GM12878 (cell line): ENCODE measurements at regions of chr1 and their contacts with region 1.

Region 1: DNA sequence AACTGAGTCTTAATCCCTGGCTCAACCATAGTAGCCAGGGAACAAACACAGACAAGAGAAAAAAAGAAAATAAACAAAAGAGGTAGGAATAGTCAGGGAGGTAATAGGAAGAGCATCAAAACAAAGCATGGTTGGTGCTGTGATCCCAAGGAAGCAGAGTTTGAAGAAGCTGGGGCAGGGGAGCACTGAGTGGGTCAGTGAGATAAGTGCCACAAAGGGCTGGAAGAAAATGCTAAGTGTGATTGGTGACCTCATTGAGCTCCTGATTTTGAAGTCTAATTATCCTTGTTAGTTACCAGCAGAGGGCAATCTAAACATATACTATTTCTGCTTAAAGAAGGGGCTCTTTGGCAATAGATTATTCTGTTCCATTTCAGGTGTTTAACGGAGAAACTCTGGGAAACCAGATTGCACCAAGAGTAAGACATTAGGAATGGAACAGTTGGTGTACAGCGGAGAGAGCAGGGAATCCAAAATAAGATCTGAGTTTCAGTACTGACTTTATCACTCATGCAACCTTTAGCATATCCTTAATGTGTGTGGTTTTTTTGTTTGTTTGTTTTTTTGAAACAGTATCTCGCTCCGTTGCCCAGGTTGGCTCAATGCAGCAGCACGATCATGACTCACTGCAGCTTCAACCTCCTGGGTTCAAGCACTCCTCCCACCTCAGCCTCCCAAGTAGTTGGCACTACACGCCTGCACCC is 30.7 kb upstream of the KIAA1614 start:
- DNase-seq: no peak
- ATAC-seq: peak; percentile 92
- H3K4me3 ChIP-seq: no peak overlapping the region
- H3K27ac ChIP-seq: no peak overlapping the region
- H3K4me1 ChIP-seq: no peaks in the 10 kb centered on the region
- H3K27me3 ChIP-seq: no peaks in the 10 kb centered on the region
- CTCF ChIP-seq: peak; percentile 38 to 66 (median 49); a peak in 5 of 6 replicates
- EP300 ChIP-seq: no peak
- POLR2A ChIP-seq: no peak
- RAD21 ChIP-seq: peak; percentile 80

Region 2: DNA sequence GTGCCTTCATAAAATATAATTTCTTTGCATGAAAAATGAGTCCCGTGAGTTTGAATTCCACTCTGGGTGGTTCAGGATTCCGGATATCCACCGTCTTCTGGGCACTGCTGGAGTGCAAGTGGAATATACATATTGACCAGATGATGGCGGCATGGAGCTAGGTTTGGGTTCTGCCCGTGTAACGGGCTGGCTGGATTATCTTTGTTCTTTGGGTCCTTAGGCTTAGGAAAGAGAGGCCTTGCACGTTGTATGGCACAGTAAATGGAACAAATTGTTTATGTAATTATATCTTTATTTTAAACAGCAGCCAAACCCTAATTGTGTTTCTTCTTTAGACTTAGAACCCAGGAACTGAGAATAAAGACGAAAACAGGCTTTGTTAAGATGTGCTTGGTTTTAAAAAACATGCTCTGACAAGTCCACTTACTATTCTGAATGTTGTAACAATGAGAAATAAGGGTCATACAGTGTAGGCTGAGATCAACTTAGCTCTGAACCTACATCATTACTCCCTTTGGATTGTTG is 366.0 kb before region 1 on chr1:
- CTCF ChIA-PET with region 1: interaction called, 22 read pairs
- POLR2A ChIA-PET with region 1: no interaction called
- RAD21 ChIA-PET with region 1: interaction called, 16 read pairs
- SMC1A ChIA-PET with region 1: interaction called, 18 read pairs
- in situ Hi-C with region 1: no loop called
- intact Hi-C with region 1: no loop called
- DNase-seq: peak; percentile 49
- ATAC-seq: peak; percentile 99
- H3K4me3 ChIP-seq: no peak overlapping the region
- H3K27ac ChIP-seq: peak overlapping the region; percentile 40; the same call in 1 of the 2 replicates
- H3K4me1 ChIP-seq: peaks cover 3% of the 10 kb centered on the region; the same call in 1 of the 2 replicates
- H3K27me3 ChIP-seq: no peaks in the 10 kb centered on the region
- CTCF ChIP-seq: peak; percentile 72 to 88 (median 76)
- EP300 ChIP-seq: no peak
- POLR2A ChIP-seq: no peak
- RAD21 ChIP-seq: peak; percentile 92

Region 3: GRCh38 chr1:180920702-180921101 is 38.7 kb after region 1 on chr1:
- CTCF ChIA-PET with region 1: interaction called, 344 read pairs
- POLR2A ChIA-PET with region 1: interaction called, 3 read pairs
- RAD21 ChIA-PET with region 1: interaction called, 215 read pairs
- SMC1A ChIA-PET with region 1: interaction called, 304 read pairs
- in situ Hi-C with region 1: no loop called
- intact Hi-C with region 1: loop called (anchors 1 kb)
- DNase-seq: no peak
- ATAC-seq: peak; percentile 38; the same call in 1 of the 3 replicates
- H3K4me3 ChIP-seq: no peak overlapping the region
- H3K27ac ChIP-seq: no peak overlapping the region
- H3K4me1 ChIP-seq: peaks cover 9% of the 10 kb centered on the region
- H3K27me3 ChIP-seq: peaks cover 0 to 3% of the 10 kb centered on the region in 2 experiments; a peak in 1 of 4 replicates
- CTCF ChIP-seq: peak; percentile 41 to 57 (median 48)
- EP300 ChIP-seq: no peak
- POLR2A ChIP-seq: no peak
- RAD21 ChIP-seq: peak; percentile 33; the same call in 1 of the 2 replicates

Region 4: DNA sequence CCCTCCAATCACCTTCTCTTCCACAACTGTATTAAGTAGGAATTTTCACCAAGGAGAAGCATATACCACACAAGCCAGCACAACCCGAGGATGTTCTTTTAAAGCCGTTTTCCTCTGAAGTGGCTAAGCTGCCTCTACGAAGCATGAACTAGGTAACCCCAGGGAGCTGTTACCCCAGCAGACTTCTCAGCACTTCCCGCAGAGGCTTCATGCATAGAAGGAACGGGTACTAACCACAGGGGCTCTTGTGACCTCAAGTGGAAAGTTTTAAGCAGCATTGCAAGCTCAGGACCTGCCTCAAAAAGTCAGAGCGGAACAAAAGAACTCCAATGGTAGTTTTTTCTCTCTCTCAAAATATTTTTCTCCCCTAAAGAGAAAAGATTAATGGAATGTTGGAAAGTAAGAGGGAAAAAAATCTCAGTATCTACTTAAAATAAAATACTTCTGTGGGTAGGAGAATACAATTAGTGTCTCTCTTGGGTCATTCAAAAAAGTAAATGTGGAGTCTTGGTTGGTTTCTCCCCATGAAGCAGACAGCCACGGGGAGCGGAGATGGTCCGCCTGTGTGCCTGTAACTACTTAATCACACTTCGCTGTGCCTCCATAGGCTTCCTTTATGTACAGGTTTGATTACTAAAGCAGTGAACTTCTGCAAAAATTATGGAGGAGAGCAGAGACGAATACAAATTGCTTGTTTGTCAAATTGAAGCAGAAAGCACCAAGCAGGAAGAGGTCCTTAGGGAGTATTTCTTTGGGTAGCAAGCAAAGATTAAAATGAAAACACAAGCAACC is 99.8 kb after region 1 on chr1:
- CTCF ChIA-PET with region 1: interaction called, 36 read pairs
- POLR2A ChIA-PET with region 1: no interaction called
- RAD21 ChIA-PET with region 1: interaction called, 26 read pairs
- SMC1A ChIA-PET with region 1: interaction called, 72 read pairs
- in situ Hi-C with region 1: no loop called
- intact Hi-C with region 1: loop called (anchors 2 kb)
- DNase-seq: peak; percentile 47
- ATAC-seq: peak; percentile 91
- H3K4me3 ChIP-seq: peak overlapping the region; percentile 19; the same call in 1 of the 2 replicates
- H3K27ac ChIP-seq: peak overlapping the region; percentile 65
- H3K4me1 ChIP-seq: peaks cover 8% of the 10 kb centered on the region; the same call in 1 of the 2 replicates
- H3K27me3 ChIP-seq: no peaks in the 10 kb centered on the region
- CTCF ChIP-seq: peak in 1 of 3 experiments; percentile 22; a peak in 1 of 6 replicates
- EP300 ChIP-seq: no peak
- POLR2A ChIP-seq: no peak
- RAD21 ChIP-seq: peak; percentile 32; the same call in 1 of the 2 replicates

Region 5: DNA sequence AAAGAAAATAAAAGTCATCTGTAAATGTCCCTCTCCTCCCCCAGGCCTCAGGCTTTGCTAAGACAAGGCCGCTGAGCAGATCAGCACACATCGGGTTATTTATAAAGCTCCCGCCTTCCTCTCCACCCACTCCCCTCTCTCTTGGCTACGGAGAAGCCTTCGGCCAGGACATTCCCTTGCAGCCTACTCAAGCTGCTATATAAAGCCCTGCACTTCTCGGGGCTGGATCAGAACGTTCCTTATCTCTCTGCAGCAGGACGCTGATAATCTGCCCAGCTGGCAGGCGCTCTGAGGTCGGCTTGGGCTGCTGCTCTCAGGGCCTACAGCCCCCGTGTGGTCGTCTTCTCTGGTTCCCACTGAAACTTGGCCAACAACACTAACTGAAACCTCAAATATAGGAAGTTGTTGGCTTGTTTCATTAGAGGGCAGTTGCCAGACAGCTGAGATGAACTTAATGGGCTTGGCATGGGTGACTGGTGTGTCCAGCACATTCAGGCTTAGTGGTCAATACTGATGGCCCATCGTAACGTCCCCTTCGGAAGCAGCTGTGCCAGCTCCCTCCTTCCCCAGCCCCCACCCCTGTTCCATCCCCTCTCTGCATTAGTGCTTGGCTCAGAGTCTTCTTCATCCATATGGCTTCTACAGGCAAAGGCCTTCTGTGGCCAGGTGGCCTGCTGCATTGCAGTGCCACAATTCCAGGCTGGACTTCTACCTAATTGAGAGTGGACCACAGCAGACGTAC is 271.1 kb after region 1 on chr1:
- CTCF ChIA-PET with region 1: interaction called, 10 read pairs
- POLR2A ChIA-PET with region 1: no interaction called
- RAD21 ChIA-PET with region 1: interaction called, 15 read pairs
- SMC1A ChIA-PET with region 1: interaction called, 22 read pairs
- in situ Hi-C with region 1: no loop called
- intact Hi-C with region 1: no loop called
- DNase-seq: no peak
- ATAC-seq: peak; percentile 88
- H3K4me3 ChIP-seq: no peak overlapping the region
- H3K27ac ChIP-seq: peak overlapping the region; percentile 62
- H3K4me1 ChIP-seq: peaks cover 48% of the 10 kb centered on the region
- H3K27me3 ChIP-seq: no peaks in the 10 kb centered on the region
- CTCF ChIP-seq: peak; percentile 19 to 40 (median 40); a peak in 4 of 6 replicates
- EP300 ChIP-seq: peak; percentile 57 to 68; a peak in 2 of 4 replicates
- POLR2A ChIP-seq: peak; percentile 61
- RAD21 ChIP-seq: peak; percentile 41; the same call in 1 of the 2 replicates

Region 6: DNA sequence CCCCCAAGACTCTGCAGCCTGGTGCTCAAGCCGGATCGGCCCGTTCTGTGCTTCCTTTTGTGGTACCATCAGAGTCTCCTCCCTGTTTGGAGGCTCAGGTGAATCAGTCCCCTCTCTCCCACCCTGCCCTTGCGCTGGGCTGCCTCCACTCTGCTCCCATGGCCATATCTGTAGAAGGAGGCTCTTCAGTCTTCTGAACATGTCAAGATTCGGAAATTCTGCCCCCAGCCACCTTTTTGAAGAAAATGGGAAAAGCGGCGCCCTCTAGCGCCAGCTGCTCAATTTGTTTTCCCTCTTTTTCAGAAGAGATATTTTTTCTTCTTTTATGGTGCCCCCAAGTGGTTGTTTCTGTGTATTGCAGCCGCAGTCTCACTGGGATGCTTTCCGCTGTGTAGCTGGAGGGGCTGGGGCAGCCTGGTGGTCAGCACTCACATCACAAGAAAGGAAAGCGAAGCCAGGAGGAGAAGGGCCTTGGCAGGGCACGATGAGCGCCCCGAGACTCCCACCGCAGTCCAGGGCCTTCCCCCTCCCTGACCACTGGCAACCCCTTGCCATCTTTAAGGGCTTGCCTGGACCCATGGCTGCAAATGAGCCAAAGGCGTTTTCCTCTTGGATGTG is 542.9 kb after region 1 on chr1:
- CTCF ChIA-PET with region 1: interaction called, 3 read pairs
- POLR2A ChIA-PET with region 1: no interaction called
- RAD21 ChIA-PET with region 1: interaction called, 9 read pairs
- SMC1A ChIA-PET with region 1: no interaction called
- in situ Hi-C with region 1: no loop called
- intact Hi-C with region 1: loop called (anchors 10 kb)
- DNase-seq: no peak
- ATAC-seq: peak; percentile 71
- H3K4me3 ChIP-seq: no peak overlapping the region
- H3K27ac ChIP-seq: no peak overlapping the region
- H3K4me1 ChIP-seq: peaks cover 30% of the 10 kb centered on the region
- H3K27me3 ChIP-seq: no peaks in the 10 kb centered on the region; a peak in 2 of 4 replicates
- CTCF ChIP-seq: peak; percentile 87 to 100 (median 98)
- EP300 ChIP-seq: no peak
- POLR2A ChIP-seq: no peak
- RAD21 ChIP-seq: peak; percentile 91